Posterior vena cava (tissue), 2 donors: ENCODE measurements at regions of chr21 and their contacts with region 1.

Region 1: GRCh38 chr21:31846690-31847089 is 26.1 kb upstream of the HUNK start:
- DNase-seq: no peak

Region 2: GRCh38 chr21:30164796-30165195 is 1681.9 kb before region 1 on chr21:
- intact Hi-C with region 1: loop called in 1 of 2 experiments (anchors 5 kb)
- DNase-seq: no peak

Region 3: GRCh38 chr21:31798842-31799704 is 47.6 kb before region 1 on chr21:
- intact Hi-C with region 1: no loop called
- DNase-seq: no peak

Region 4: GRCh38 chr21:32070676-32071330 is 224.1 kb after region 1 on chr21:
- intact Hi-C with region 1: no loop called
- DNase-seq: no peak